ENCODE measurements at regions of chr22 and their contacts with region 1.

Region 1: DNA sequence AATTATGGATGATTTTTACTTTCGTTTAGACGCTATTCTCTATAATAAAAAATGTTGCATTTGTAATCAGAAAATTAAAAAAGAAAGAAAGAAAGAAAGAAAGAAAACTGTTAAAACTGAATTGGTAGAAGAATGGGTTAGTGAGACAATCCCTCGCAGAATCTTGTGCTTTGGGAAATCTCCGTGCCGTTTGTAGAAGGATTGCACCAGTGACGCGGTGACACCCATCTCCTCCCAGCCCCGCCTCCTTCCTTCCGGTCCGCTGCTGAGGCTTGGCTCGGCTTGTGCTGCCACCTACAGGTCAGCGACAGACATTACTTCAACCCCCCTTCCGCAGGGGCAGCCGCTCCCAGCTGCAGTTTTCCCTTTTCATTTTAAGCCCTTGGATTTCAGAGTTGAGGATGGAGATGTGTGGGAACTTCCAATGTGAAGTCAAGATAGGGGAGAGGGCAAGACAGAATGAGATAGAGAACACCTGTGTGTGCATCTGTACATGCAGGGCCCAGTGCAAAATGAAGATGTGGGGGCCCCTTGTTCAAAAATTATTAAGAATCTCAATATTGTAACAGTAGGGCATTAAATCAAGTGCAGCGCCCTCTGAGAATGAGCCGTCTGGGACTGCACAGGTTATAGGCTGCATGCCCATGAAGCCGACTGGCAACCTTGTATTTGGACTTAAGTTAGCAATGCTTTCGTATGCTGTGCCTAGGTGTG is 41.1 kb downstream of the TST start:
- DNase-seq: peak; percentile 84
- H3K4me3 Mint-ChIP-seq: peak overlapping the region; percentile 86
- H3K27ac Mint-ChIP-seq: peak overlapping the region; percentile 74
- H3K4me1 Mint-ChIP-seq: peaks cover 15% of the 10 kb centered on the region
- H3K27me3 Mint-ChIP-seq: peaks cover 8% of the 10 kb centered on the region

Region 2: DNA sequence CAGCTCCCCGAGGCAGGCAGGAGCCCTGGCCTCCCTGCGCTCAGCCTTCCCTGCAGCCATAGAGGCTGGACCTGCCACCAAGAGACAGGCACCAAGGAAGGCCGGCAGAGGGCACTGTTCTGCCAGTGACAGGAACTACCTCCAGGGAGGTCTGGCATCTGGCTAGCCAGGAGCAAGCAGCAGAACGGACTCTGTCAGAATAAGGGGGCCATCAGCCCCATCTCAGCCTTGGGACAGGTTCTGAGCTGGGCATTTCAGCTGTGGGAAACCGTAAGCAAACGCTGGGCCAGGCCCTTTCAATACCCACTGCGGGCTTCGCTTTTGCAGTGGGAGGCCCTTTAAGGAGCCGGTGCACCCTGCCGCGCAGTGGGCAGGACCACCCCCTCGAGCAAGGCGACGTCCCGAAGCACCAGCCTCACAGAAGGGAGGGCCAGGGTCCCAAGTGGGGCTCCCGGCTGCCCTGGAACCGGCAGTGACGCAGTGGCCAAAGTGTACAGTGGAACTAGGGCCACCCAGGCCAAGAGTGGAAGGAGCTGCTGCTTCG is 220.4 kb before region 1 on chr22:
- intact Hi-C with region 1: loop called (anchors 1 kb)
- DNase-seq: peak; percentile 63
- H3K4me3 Mint-ChIP-seq: no peak overlapping the region
- H3K27ac Mint-ChIP-seq: no peak overlapping the region
- H3K4me1 Mint-ChIP-seq: no peaks in the 10 kb centered on the region
- H3K27me3 Mint-ChIP-seq: peaks cover 8% of the 10 kb centered on the region

Region 3: DNA sequence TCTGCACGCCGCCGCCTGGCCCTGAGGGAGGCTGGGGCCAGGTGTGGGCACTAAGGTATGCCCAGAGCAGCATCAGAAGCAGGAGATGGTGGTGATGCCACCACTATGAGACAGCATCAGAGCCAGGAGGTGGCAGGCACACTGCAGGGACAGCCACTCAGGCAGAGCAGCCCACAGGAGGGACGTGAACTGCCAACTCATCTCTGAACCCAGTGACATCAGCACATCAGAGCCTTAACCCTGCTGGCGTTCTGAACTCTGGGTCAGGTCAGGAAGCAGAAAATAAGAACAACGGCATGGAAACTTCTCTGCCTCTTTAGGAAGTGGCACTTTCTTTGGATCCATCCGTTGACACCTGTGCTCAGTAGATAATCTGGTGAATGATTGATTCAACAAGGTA is 187.5 kb before region 1 on chr22:
- intact Hi-C with region 1: loop called (anchors 1 kb)
- DNase-seq: peak; percentile 29
- H3K4me3 Mint-ChIP-seq: no peak overlapping the region
- H3K27ac Mint-ChIP-seq: no peak overlapping the region
- H3K4me1 Mint-ChIP-seq: peaks cover 15% of the 10 kb centered on the region
- H3K27me3 Mint-ChIP-seq: peaks cover 4% of the 10 kb centered on the region

Region 4: GRCh38 chr22:37019309-37020125 is 41.4 kb after region 1 on chr22 and contains the starts of genes MPST and TST:
- intact Hi-C with region 1: loop called (anchors 1 kb)
- DNase-seq: peak; percentile 53
- H3K4me3 Mint-ChIP-seq: peak within 1 kb of the TSS; percentile 90
- H3K27ac Mint-ChIP-seq: peak within 1 kb of the TSS; percentile 74
- H3K4me1 Mint-ChIP-seq: peaks cover 16% of the 10 kb centered on the region
- H3K27me3 Mint-ChIP-seq: no peaks in the 10 kb centered on the region
- total RNA-seq, gene MPST: 18.0 and 20.1 TPM in 2 replicates
- total RNA-seq, gene TST: 6.9 and 8.2 TPM in 2 replicates

Region 5: DNA sequence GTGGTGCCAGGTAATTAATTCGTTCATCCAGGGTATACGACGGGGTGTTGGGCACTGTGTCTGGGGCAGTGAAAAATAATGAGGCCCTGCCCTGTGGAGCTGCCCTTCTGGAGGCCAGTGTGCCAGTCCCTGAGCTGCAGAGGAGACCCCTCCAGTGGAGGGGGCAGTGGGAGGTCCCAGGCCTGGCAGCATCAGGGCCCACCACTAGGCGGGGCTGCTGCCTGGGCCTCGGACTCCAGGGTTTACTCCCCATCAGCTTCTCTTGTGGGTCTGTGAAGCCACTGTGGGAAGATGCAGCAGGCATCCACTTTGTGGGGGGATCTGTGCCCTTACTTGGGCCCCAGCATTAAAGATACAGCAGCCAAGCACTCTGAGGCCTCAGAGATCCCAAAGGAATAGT is 148.8 kb after region 1 on chr22:
- intact Hi-C with region 1: no loop called
- DNase-seq: no peak
- H3K4me3 Mint-ChIP-seq: no peak overlapping the region
- H3K27ac Mint-ChIP-seq: peak overlapping the region; percentile 67
- H3K4me1 Mint-ChIP-seq: peaks cover 45% of the 10 kb centered on the region
- H3K27me3 Mint-ChIP-seq: peaks cover 2% of the 10 kb centered on the region

Measured in activated T-helper 1 cell treated with anti-CD3 and anti-CD28 coated beads, Interleukin-12 subunit alpha, Interleukin-12 subunit beta, Interleukin-2, Interleukin-4 antibody, amounts not matched to agents 30 ng/mL and 10 ng/mL and 1 ng/mL, durations not matched to agents 14 hours and 24 hours and 36 hours (primary cell).